Cardiac septum (tissue), 1 donor: ENCODE measurements at regions of chr6 and their contacts with region 1.

Region 1: GRCh38 chr6:46491628-46492547 is 639 bp upstream of the RCAN2 start:
- DNase-seq: peak; percentile 84

Region 2: GRCh38 chr6:46419576-46420002 is 72.3 kb before region 1 on chr6:
- intact Hi-C with region 1: loop called (anchors 1 kb)
- DNase-seq: no peak

Region 3: DNA sequence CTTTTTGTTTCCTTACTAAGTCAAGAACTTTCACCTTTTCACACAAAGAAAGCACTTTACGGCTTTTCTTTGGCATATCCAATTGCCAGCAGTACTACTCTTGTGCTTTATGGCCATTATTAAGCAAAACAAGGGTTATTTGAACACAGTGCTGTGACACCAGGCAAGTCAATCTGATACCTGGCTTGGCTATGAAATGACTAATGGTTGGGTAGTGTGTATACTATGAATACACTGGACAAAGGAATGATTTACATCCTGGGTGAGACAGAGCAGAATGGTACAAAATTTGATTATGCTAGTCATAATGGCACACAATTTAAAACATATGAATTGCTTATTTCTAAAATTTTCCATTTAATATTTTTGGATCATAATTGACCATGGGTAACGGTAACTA is 572.4 kb after region 1 on chr6:
- intact Hi-C with region 1: no loop called
- DNase-seq: no peak